Esophagus squamous epithelium (tissue), 5 donors: ENCODE measurements at regions of chr9 and their contacts with region 1.

Region 1: GRCh38 chr9:83937911-83938323 is 16.7 kb upstream of the KIF27 start:
- DNase-seq: no peak
- H3K4me3 ChIP-seq: no peak overlapping the region
- H3K27ac ChIP-seq: no peak overlapping the region
- H3K4me1 ChIP-seq: peaks cover 0 to 23% (median 8%) of the 10 kb centered on the region in 3 donors
- H3K27me3 ChIP-seq: no peaks in the 10 kb centered on the region
- CTCF ChIP-seq: peak; percentile 45 to 75 (median 63)
- POLR2A ChIP-seq: no peak

Region 2: DNA sequence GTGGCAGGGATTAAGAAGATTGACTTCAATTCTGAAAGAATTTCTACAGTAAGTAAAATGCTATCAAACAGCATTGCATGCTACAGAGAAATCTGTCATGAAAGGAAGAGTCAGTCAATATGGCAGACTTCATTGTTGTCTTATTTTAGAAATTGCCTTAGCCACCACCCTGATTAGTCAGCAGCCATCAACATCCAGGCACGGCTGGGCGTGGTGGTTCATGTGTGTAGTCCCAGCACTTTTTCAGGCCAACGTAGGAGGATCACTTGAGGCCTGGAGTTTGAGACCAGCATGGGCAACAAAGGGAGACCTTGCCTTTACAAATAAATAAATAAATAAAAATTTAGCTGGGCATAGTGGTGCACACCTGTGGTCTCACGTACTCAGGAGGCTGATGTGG is 89.3 kb after region 1 on chr9:
- intact Hi-C with region 1: no loop called
- DNase-seq: no peak
- H3K4me3 ChIP-seq: no peak overlapping the region
- H3K27ac ChIP-seq: no peak overlapping the region
- H3K4me1 ChIP-seq: no peaks in the 10 kb centered on the region
- H3K27me3 ChIP-seq: no peaks in the 10 kb centered on the region
- CTCF ChIP-seq: no peak
- POLR2A ChIP-seq: no peak

Region 3: DNA sequence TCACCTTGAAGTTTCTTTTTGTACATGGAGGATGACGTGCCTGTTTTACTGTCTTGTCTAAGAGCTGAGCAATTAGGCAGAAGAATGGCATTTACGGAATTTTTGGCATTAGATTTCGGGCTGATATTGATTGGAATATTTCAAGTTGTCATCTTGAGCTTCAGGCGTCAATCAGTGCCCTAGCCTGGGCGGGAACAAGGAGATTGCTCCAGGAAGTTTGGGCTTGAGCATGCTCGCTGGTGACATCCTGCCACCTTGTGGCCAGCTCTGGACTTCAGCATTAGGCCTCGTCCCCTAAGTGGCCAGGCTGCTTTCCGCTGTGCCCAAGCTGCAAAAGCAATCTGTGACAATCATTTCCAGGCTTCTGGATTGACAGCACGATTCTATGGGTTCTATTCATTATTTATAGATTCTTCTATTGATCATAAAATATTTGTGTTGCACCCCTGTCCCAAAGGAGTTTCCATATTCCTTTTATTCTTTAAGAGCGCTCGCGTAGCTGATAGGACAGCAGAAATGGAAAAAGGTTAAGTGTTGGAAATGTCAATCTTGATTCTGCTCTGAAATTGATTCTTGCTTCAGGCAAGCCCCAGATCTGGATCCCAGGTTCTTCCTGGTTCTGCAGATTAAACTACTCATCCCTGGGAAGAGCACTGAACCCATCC is 323.3 kb after region 1 on chr9:
- intact Hi-C with region 1: loop called (anchors 5 kb)
- DNase-seq: no peak
- H3K4me3 ChIP-seq: peak overlapping the region in 3 of 4 donors; percentile 19 to 53 (median 25)
- H3K27ac ChIP-seq: no peak overlapping the region
- H3K4me1 ChIP-seq: peaks cover 0 to 4% (median 0%) of the 10 kb centered on the region in 3 donors
- H3K27me3 ChIP-seq: peaks cover 0 to 8% (median 0%) of the 10 kb centered on the region in 4 donors
- CTCF ChIP-seq: peak; percentile 83 to 92 (median 90)
- POLR2A ChIP-seq: no peak